Activated T-helper 2 cell treated with anti-CD3 and anti-CD28 coated beads, Interferon-gamma antibody, Interleukin-2, Interleukin-4, amounts not matched to agents 10 μg/mL and 5 μg/mL and 100 μg/mL, durations not matched to agents 14 hours and 24 hours and 36 hours (primary cell): ENCODE measurements at regions of chr7 and their contacts with region 1.

Region 1: DNA sequence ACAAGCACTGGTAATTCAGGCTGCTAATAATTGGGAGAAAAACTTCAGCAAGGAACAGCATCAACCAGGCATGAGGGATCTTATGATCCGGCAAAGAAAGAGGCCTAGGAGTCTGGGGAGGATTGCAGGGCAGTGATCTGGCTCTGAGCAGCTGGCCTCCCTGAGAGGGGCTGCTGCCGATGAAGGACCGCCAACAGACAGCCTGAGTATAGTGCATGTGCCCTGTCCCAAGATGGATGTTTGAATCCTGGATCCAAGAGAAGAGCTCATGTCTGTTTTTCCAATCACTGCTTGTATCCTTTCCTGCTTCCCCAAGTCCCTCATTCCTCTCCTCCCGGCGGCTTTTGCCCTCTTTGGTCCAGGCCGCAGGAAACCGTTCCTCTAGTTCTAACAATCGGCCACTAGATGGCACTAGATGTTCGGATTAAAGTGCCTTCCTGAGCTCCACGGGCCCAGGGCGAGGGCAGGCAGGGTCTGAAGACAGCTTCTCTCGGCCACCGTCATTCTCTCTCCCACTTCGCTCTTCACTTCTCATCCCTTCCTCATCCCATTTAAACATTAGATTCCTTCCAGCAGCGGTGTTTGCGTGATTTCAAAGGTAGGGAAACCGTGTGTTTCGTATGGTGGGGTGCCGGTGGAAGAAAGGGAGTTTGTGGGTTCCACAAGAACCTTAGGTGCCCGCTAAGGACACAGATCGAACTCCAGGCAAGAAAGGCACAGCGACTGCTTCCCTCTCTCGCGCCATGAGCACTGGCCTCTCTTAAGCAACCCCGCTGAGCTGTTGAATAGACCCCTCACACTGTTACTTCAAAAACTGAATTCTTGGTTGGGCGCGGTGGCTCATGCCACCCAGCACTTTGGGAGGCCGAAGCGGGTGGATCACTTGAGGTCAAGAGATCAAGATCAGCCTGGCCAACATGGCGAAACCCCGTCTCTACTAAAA is 82.4 kb downstream of the ADCYAP1R1 start:
- DNase-seq: peak; percentile 14
- H3K4me3 Mint-ChIP-seq: no peak overlapping the region
- H3K27ac Mint-ChIP-seq: no peak overlapping the region
- H3K4me1 Mint-ChIP-seq: peaks cover 2% of the 10 kb centered on the region
- H3K27me3 Mint-ChIP-seq: no peaks in the 10 kb centered on the region

Region 2: DNA sequence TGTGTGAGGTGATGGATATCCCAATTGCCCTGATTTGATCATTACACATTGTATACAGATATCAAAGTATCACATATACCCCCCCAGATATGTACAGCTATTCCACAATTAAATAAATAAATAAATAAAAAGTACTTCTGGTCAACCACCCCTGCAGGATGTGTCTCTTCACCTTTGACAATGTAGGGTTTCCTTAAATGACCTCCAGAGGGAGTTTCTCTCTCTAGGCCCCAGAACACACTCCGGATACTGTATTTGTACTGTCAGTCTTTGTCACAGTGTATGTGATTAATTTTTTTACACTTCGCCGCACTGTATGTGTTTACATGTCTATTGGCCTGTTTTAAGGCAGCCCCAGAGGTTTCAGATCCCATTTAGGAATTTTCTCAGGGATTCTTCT is 41.2 kb after region 1 on chr7:
- intact Hi-C with region 1: no loop called
- DNase-seq: no peak
- H3K4me3 Mint-ChIP-seq: no peak overlapping the region
- H3K27ac Mint-ChIP-seq: no peak overlapping the region
- H3K4me1 Mint-ChIP-seq: no peaks in the 10 kb centered on the region
- H3K27me3 Mint-ChIP-seq: no peaks in the 10 kb centered on the region

Region 3: DNA sequence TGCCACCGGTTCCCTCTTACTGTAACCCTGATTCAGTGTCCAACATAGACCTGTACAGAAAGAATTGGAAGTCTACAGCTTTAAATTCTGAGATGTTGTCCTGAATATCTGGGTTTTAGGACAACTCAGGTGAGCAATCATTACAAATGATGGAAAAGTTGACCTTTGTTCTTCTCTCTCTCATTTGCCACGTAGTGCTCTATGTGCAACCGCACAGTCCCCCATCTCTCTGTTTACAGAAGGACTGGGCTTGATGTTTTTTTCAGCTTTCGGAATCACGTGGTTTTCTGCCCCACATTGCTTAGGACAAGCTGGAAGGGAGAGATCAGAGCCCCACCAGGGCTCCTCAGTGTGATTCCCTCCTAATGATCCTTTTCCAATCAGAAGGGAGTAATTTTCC is 183.8 kb after region 1 on chr7:
- intact Hi-C with region 1: no loop called
- DNase-seq: no peak
- H3K4me3 Mint-ChIP-seq: no peak overlapping the region
- H3K27ac Mint-ChIP-seq: no peak overlapping the region
- H3K4me1 Mint-ChIP-seq: no peaks in the 10 kb centered on the region
- H3K27me3 Mint-ChIP-seq: no peaks in the 10 kb centered on the region

Region 4: GRCh38 chr7:31735991-31736982 is 601.8 kb after region 1 on chr7:
- intact Hi-C with region 1: loop called (anchors 10 kb)
- DNase-seq: peak; percentile 8
- H3K4me3 Mint-ChIP-seq: no peak overlapping the region
- H3K27ac Mint-ChIP-seq: no peak overlapping the region
- H3K4me1 Mint-ChIP-seq: no peaks in the 10 kb centered on the region
- H3K27me3 Mint-ChIP-seq: no peaks in the 10 kb centered on the region

Region 5: DNA sequence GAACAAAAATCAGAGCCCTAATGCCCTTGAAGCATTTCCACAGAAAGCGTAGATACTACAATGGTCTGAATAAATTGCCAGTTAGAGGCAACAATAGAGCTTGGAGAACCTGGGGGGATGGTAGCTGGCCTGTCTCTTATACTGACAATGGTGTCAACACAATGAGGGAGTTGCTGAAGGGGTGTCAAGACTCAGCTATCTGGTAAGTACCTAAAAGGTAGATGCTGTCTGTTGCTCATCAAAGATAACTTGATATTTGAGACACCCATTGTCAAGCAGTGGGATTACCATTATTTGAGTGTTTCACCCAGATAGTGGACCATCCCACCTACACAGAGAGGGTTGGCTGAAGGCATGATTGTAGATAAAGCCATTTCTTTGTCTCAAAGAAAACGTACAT is 862.9 kb after region 1 on chr7:
- intact Hi-C with region 1: no loop called
- DNase-seq: no peak
- H3K4me3 Mint-ChIP-seq: no peak overlapping the region
- H3K27ac Mint-ChIP-seq: no peak overlapping the region
- H3K4me1 Mint-ChIP-seq: no peaks in the 10 kb centered on the region
- H3K27me3 Mint-ChIP-seq: no peaks in the 10 kb centered on the region